Transverse colon (tissue), 4 donors: ENCODE measurements at regions of chr2 and their contacts with region 1.

Region 1: GRCh38 chr2:96663789-96664645 is 21.5 kb downstream of the FER1L5 start:
- DNase-seq: no peak
- H3K4me3 ChIP-seq: no peak overlapping the region
- H3K27ac ChIP-seq: no peak overlapping the region
- H3K4me1 ChIP-seq: no peaks in the 10 kb centered on the region
- H3K27me3 ChIP-seq: no peaks in the 10 kb centered on the region
- CTCF ChIP-seq: no peak
- EP300 ChIP-seq: no peak
- POLR2A ChIP-seq: no peak

Region 2: DNA sequence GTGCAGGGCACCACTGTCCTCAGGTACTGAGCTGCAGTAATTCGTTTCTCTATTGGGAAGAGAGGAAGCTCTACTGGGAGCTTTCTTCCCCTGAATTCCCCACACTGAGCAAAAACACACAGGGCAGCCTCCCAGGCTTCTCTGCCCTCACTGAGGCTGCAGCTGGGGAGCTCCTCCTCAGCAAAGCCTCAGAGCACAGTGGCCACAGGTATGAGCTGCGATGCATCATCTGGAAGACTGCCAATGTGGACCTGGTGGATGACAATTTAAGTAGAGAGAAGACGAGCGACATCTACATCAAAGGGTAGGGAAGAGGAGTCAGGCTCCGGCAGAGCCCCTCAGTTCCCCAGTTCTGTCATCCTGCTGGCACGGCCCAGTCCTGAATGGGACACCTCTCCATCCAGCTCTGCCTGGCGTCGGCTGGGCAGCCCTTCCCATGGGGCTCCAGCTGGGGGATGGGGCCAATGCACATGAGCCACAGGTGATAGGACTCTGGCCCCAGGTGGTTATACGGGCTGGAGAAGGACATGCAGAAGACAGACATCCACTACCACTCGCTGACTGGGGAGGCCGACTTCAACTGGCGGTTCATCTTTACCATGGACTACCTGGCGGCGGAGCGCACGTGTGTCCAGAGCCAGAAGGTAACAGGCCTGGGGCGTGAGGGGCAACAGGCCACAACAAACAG is 38.2 kb after region 1 on chr2:
- in situ Hi-C with region 1: no loop called
- intact Hi-C with region 1: loop called (anchors 1 kb)
- DNase-seq: no peak
- H3K4me3 ChIP-seq: no peak overlapping the region
- H3K27ac ChIP-seq: no peak overlapping the region
- H3K4me1 ChIP-seq: no peaks in the 10 kb centered on the region
- H3K27me3 ChIP-seq: no peaks in the 10 kb centered on the region
- CTCF ChIP-seq: no peak
- EP300 ChIP-seq: no peak
- POLR2A ChIP-seq: no peak